Astrocyte of the cerebellum (primary cell): ENCODE measurements at regions of chr6 and their contacts with region 1.

Region 1: DNA sequence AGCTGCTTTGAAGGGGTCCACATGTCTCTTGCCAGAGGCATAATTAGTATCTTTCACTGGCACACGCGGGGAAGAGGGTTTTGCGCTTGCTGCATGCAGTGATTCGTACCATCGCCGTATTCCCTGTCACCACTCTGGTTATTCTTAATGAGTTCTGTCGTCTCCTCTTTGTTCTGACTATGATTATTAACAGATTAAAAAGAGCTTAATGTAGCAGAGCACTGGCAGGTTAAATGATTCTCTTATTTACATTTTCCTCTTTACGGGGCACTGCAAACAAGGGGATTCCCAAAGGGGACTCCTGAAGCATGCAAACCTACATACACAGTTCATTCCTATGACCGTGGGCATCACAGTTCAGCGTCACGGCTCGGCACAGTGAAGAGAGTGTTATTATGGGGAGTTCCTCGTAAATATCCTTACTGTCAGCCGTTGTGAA is 204.8 kb downstream of the DTNBP1 start:
- DNase-seq: no peak
- H3K4me3 ChIP-seq: no peak overlapping the region
- CTCF ChIP-seq: no peak

Region 2: GRCh38 chr6:15365273-15365687 is 92.8 kb before region 1 on chr6:
- in situ Hi-C with region 1: no loop called
- DNase-seq: peak; percentile 66
- H3K4me3 ChIP-seq: no peak overlapping the region
- CTCF ChIP-seq: no peak

Region 3: GRCh38 chr6:15539722-15540270 is 81.8 kb after region 1 on chr6:
- in situ Hi-C with region 1: loop called (anchors 5 kb)
- DNase-seq: no peak
- H3K4me3 ChIP-seq: no peak overlapping the region
- CTCF ChIP-seq: no peak

Region 4: DNA sequence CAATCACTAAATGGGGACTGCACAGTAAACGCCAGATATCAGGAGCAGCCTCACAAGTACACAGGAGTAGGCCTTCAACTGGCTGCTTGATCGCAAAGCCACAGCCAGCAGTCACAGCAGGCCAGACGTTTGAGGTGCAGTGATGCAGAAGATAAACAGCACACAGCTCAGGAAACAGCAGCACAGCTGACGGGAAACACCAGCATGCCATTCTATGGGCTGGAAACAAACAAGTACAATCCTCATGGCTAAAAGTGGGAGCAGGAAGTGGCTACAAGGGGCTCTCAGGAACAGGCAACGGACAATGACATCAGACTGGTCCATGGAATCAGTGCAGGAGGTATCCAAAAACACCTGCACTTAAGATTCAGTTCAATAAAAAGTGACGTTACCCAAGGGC is 93.8 kb after region 1 on chr6:
- in situ Hi-C with region 1: no loop called
- DNase-seq: peak; percentile 70
- H3K4me3 ChIP-seq: no peak overlapping the region
- CTCF ChIP-seq: no peak